CD4-positive, alpha-beta memory T cell (primary cell): ENCODE measurements at regions of chr11 and their contacts with region 1.

Region 1: GRCh38 chr11:19259487-19260345 is 19.0 kb upstream of the E2F8 start:
- DNase-seq: peak in 4 of 5 donors; percentile 36 to 53 (median 44)
- H3K4me3 ChIP-seq: no peak overlapping the region
- H3K4me3 Mint-ChIP-seq: no peak overlapping the region
- H3K27ac ChIP-seq: no peak overlapping the region
- H3K27ac Mint-ChIP-seq: no peak overlapping the region
- H3K4me1 ChIP-seq: no peaks in the 10 kb centered on the region
- H3K4me1 Mint-ChIP-seq: no peaks in the 10 kb centered on the region
- H3K27me3 ChIP-seq: no peaks in the 10 kb centered on the region
- H3K27me3 Mint-ChIP-seq: peaks cover 2 to 5% of the 10 kb centered on the region in 2 donors

Region 2: GRCh38 chr11:19145319-19145718 is 114.4 kb before region 1 on chr11:
- CTCF ChIA-PET with region 1: no interaction called
- POLR2A ChIA-PET with region 1: no interaction called
- intact Hi-C with region 1: no loop called
- DNase-seq: no peak
- H3K4me3 ChIP-seq: no peak overlapping the region
- H3K4me3 Mint-ChIP-seq: no peak overlapping the region
- H3K27ac ChIP-seq: no peak overlapping the region
- H3K27ac Mint-ChIP-seq: peak overlapping the region in 1 of 7 donors; percentile 2
- H3K4me1 ChIP-seq: no peaks in the 10 kb centered on the region
- H3K4me1 Mint-ChIP-seq: peaks cover 0 to 2% (median 1%) of the 10 kb centered on the region in 4 donors
- H3K27me3 ChIP-seq: no peaks in the 10 kb centered on the region
- H3K27me3 Mint-ChIP-seq: no peaks in the 10 kb centered on the region

Region 3: DNA sequence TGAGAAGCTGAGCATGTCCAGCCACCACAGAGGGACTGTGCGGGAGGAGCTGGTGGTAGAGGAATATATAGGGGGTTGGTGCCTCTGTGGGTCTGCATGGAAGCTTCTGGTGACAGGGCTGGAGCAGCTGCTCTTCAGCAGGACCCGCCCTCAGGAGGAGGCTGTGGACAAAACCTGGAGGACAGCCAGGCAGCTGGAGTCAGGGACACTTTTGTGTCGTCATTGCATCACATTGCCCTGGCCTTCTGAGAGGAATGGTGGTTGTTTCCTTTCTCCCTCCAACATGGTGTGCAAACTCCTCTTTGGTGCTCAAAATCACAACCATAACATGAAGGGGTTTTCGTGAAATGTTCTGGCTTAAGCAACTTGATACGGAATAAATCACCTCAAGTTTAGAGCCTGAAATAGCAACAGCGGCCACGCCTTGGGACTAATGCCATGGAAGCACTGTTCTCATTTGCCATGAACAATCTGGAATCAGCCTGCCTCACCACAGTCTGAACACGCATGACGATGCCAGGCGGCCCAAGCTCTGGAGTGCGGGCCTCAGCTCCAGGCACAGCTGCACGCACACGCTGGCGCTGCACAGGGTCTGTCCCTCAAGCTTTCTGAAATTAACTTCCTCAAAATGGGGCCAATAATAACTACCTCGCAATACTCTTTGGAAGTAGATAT is 40.8 kb before region 1 on chr11:
- CTCF ChIA-PET with region 1: interaction called, 13 read pairs
- POLR2A ChIA-PET with region 1: no interaction called
- intact Hi-C with region 1: no loop called
- DNase-seq: no peak
- H3K4me3 ChIP-seq: no peak overlapping the region
- H3K4me3 Mint-ChIP-seq: no peak overlapping the region
- H3K27ac ChIP-seq: no peak overlapping the region
- H3K27ac Mint-ChIP-seq: no peak overlapping the region
- H3K4me1 ChIP-seq: no peaks in the 10 kb centered on the region
- H3K4me1 Mint-ChIP-seq: peaks cover 0 to 1% (median 0%) of the 10 kb centered on the region in 4 donors
- H3K27me3 ChIP-seq: peaks cover 6% of the 10 kb centered on the region
- H3K27me3 Mint-ChIP-seq: peaks cover 8 to 11% of the 10 kb centered on the region in 2 donors

Region 4: GRCh38 chr11:19246816-19247215 is 12.9 kb before region 1 on chr11:
- CTCF ChIA-PET with region 1: interaction called, 13 read pairs
- POLR2A ChIA-PET with region 1: no interaction called
- intact Hi-C with region 1: no loop called
- DNase-seq: no peak
- H3K4me3 ChIP-seq: no peak overlapping the region
- H3K4me3 Mint-ChIP-seq: no peak overlapping the region
- H3K27ac ChIP-seq: no peak overlapping the region
- H3K27ac Mint-ChIP-seq: no peak overlapping the region
- H3K4me1 ChIP-seq: peaks cover 6% of the 10 kb centered on the region
- H3K4me1 Mint-ChIP-seq: peaks cover 3 to 12% (median 7%) of the 10 kb centered on the region in 4 donors
- H3K27me3 ChIP-seq: peaks cover 8% of the 10 kb centered on the region
- H3K27me3 Mint-ChIP-seq: peaks cover 24 to 40% of the 10 kb centered on the region in 2 donors

Region 5: GRCh38 chr11:19275481-19275880 is 15.8 kb after region 1 on chr11:
- CTCF ChIA-PET with region 1: interaction called, 19 read pairs
- POLR2A ChIA-PET with region 1: no interaction called
- intact Hi-C with region 1: no loop called
- DNase-seq: no peak
- H3K4me3 ChIP-seq: no peak overlapping the region
- H3K4me3 Mint-ChIP-seq: no peak overlapping the region
- H3K27ac ChIP-seq: no peak overlapping the region
- H3K27ac Mint-ChIP-seq: no peak overlapping the region
- H3K4me1 ChIP-seq: no peaks in the 10 kb centered on the region
- H3K4me1 Mint-ChIP-seq: peaks cover 0 to 7% (median 1%) of the 10 kb centered on the region in 4 donors
- H3K27me3 ChIP-seq: no peaks in the 10 kb centered on the region
- H3K27me3 Mint-ChIP-seq: peaks cover 9 to 10% of the 10 kb centered on the region in 2 donors